Heart left ventricle (tissue), 16 donors: ENCODE measurements at regions of chr17 and their contacts with region 1.

Region 1: GRCh38 chr17:66165513-66166123 is 26.3 kb downstream of the CEP112 start:
- DNase-seq: no peak
- ATAC-seq: no peak
- H3K4me3 ChIP-seq: no peak overlapping the region
- H3K27ac ChIP-seq: no peak overlapping the region
- H3K4me1 ChIP-seq: peaks cover 0 to 7% (median 0%) of the 10 kb centered on the region in 12 donors
- H3K27me3 ChIP-seq: no peaks in the 10 kb centered on the region
- CTCF ChIP-seq: peak; percentile 57 to 80 (median 72)
- POLR2A ChIP-seq: no peak

Region 2: DNA sequence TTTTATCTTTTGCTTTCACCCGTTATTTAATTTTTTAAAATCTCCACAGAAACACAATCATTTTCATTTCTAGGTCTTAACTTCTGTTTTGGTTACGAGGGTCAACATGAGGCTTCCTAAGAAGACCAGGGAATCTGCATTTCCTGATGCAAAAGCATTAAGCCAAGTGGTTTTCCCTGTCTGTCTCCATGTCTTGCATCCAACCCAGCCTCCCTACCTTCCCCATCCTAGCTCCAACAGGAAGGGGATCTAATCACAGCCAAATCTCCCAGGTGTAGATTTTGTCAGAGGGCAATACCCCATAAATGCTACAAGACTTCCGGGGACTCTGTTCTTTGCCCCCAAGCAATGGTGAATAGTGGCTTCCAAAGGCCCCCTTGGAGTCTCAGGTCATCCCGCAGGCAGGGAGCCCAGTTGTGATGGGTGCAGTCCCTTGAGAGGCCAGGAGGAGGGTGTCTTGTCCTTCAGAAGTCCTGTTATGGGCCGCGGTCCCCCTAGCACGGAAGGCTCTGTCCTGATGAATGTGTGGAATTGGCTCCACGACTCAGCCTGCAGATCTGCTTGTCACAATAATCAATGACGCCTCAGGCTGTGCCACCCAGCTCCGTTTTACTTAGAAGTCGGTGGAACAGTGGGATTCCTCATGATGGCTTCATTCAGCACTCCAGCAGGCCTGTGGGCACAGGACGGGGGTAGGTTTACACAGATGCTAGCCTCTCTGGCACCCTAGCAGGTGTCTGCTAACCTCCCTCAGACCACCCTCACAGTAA is 887.4 kb before region 1 on chr17:
- intact Hi-C with region 1: loop called in 2 of 10 experiments (anchors 5 kb)
- DNase-seq: peak in 3 of 5 donors; percentile 17 to 31 (median 31)
- ATAC-seq: peak in 3 of 4 donors; percentile 44 to 78 (median 73)
- H3K4me3 ChIP-seq: no peak overlapping the region
- H3K27ac ChIP-seq: no peak overlapping the region
- H3K4me1 ChIP-seq: peaks cover 0 to 9% (median 0%) of the 10 kb centered on the region in 12 donors
- H3K27me3 ChIP-seq: peaks cover 0 to 9% (median 0%) of the 10 kb centered on the region in 9 donors
- CTCF ChIP-seq: peak; percentile 14 to 50 (median 33)
- POLR2A ChIP-seq: no peak

Region 3: DNA sequence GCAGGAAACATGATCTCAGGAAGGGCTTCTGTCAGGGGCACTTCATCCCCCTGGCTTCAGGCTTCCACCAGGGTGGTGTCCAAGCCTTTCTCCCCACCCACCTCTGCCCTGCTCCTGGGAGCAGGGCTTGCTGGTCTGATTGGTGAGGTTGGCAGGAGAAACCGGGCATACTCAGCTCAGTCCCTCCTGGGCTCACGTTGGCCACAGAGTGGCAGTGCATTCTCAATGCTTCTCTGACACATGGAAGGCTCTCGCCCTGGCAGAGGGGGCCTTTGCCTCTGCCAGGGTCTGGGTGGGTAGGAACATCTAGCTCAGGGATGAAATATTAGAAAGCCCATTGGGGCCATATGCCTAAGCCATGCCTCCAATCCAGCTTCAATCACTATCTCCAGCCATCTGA is 747.0 kb before region 1 on chr17:
- intact Hi-C with region 1: loop called in 1 of 10 experiments (anchors 5 kb)
- DNase-seq: peak in 2 of 5 donors; percentile 35 to 40
- ATAC-seq: peak; percentile 42 to 82 (median 72)
- H3K4me3 ChIP-seq: no peak overlapping the region
- H3K27ac ChIP-seq: no peak overlapping the region
- H3K4me1 ChIP-seq: no peaks in the 10 kb centered on the region
- H3K27me3 ChIP-seq: no peaks in the 10 kb centered on the region
- CTCF ChIP-seq: peak in 7 of 12 donors; percentile 11 to 34 (median 29)
- POLR2A ChIP-seq: no peak

Region 4: GRCh38 chr17:65547253-65547670 is 618.4 kb before region 1 on chr17:
- intact Hi-C with region 1: loop called in 4 of 10 experiments (anchors 10 kb)
- DNase-seq: peak in 2 of 5 donors; percentile 51 to 72
- ATAC-seq: peak; percentile 77 to 88 (median 84)
- H3K4me3 ChIP-seq: no peak overlapping the region
- H3K27ac ChIP-seq: peak overlapping the region in 11 of 12 donors; percentile 34 to 90 (median 81)
- H3K4me1 ChIP-seq: peaks cover 0 to 87% (median 45%) of the 10 kb centered on the region in 12 donors
- H3K27me3 ChIP-seq: no peaks in the 10 kb centered on the region
- CTCF ChIP-seq: no peak
- POLR2A ChIP-seq: no peak

Region 5: GRCh38 chr17:65953316-65954311 is 212.0 kb before region 1 on chr17:
- intact Hi-C with region 1: no loop called
- DNase-seq: no peak
- ATAC-seq: no peak
- H3K4me3 ChIP-seq: no peak overlapping the region
- H3K27ac ChIP-seq: no peak overlapping the region
- H3K4me1 ChIP-seq: no peaks in the 10 kb centered on the region
- H3K27me3 ChIP-seq: no peaks in the 10 kb centered on the region
- CTCF ChIP-seq: no peak
- POLR2A ChIP-seq: no peak